Psoas muscle (tissue), 8 donors: ENCODE measurements at regions of chr19 and their contacts with region 1.

Region 1: DNA sequence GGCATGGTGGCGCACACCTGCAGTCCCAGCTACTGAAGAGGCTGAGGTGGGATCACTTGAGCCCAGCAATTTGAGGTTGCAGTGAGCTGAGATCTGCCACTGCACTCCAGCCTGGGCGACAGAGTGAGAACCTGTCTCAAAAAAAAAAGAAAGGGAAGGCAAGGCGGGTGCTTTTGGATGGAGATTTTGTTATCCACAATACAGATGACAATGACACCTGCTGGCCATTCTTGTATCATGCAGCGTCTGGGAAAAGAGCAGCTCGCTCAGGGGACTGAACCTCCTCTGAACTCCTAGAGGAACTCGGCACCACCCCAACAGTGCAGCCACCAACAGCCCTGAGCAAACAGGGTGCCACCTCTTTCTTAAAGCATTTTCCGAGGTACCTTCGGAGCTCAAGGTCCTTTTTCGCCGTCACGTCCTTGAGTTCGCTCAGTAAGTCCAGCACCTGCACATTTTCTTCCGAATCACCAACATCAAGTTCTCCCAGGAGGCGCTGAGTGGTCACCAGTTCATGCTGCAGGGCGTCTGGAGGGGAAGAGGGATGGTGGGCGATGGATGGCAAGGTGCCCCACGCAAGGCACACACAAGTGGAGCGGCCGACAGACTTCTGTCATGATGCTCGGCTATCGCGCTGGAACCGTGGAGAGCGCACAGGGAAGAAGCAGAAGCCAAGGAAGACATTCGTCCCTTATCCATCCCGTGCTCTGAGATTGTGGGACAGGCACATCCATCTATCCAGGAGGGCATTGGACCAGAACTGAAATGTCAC is 22.6 kb downstream of the HAUS8 start:
- DNase-seq: no peak
- ATAC-seq: peak in 2 of 4 donors; percentile 28 to 41
- H3K4me3 ChIP-seq: no peak overlapping the region
- H3K27ac ChIP-seq: no peak overlapping the region
- H3K4me1 ChIP-seq: no peaks in the 10 kb centered on the region
- H3K27me3 ChIP-seq: no peaks in the 10 kb centered on the region
- CTCF ChIP-seq: peak; percentile 58

Region 2: GRCh38 chr19:16714702-16715287 is 337.8 kb before region 1 on chr19:
- intact Hi-C with region 1: loop called (anchors 5 to 10 kb)
- DNase-seq: peak; percentile 34 to 56
- ATAC-seq: peak in 2 of 4 donors; percentile 34 to 38
- H3K4me3 ChIP-seq: no peak overlapping the region
- H3K27ac ChIP-seq: no peak overlapping the region
- H3K4me1 ChIP-seq: no peaks in the 10 kb centered on the region
- H3K27me3 ChIP-seq: no peaks in the 10 kb centered on the region
- CTCF ChIP-seq: peak; percentile 69

Region 3: GRCh38 chr19:16771618-16772017 is 281.0 kb before region 1 on chr19:
- intact Hi-C with region 1: loop called (anchors 1 to 5 kb)
- DNase-seq: peak; percentile 58 to 78
- ATAC-seq: peak; percentile 56 to 87 (median 70)
- H3K4me3 ChIP-seq: no peak overlapping the region
- H3K27ac ChIP-seq: no peak overlapping the region
- H3K4me1 ChIP-seq: no peaks in the 10 kb centered on the region
- H3K27me3 ChIP-seq: peaks cover 0 to 7% (median 0%) of the 10 kb centered on the region in 3 donors
- CTCF ChIP-seq: peak; percentile 78

Region 4: GRCh38 chr19:17215125-17215971 is 162.7 kb after region 1 on chr19 and contains the start of gene USE1:
- intact Hi-C with region 1: no loop called
- DNase-seq: peak; percentile 90 to 95
- ATAC-seq: peak; percentile 94 to 97 (median 95)
- H3K4me3 ChIP-seq: peak within 1 kb of the TSS; percentile 84
- H3K27ac ChIP-seq: peak within 1 kb of the TSS; percentile 95
- H3K4me1 ChIP-seq: peaks cover 5% of the 10 kb centered on the region
- H3K27me3 ChIP-seq: no peaks in the 10 kb centered on the region
- CTCF ChIP-seq: no peak
- total RNA-seq, gene USE1: 25.5 to 41.2 (median 30.5) TPM